ENCODE measurements at regions of chr2 and their contacts with region 1.

Region 1: GRCh38 chr2:27370026-27370815 is at the starts of genes EIF2B4 and SNX17:
- DNase-seq: peak; percentile 99
- ATAC-seq: peak; percentile 95
- H3K4me3 Mint-ChIP-seq: peak within 1 kb of the TSS; percentile 90
- H3K27ac Mint-ChIP-seq: peak within 1 kb of the TSS; percentile 95
- H3K4me1 Mint-ChIP-seq: peaks cover 39% of the 10 kb centered on the region
- H3K27me3 Mint-ChIP-seq: no peaks in the 10 kb centered on the region
- total RNA-seq, gene EIF2B4: 31.0 to 39.2 TPM
- total RNA-seq, gene SNX17: 63.9 to 82.1 TPM

Region 2: DNA sequence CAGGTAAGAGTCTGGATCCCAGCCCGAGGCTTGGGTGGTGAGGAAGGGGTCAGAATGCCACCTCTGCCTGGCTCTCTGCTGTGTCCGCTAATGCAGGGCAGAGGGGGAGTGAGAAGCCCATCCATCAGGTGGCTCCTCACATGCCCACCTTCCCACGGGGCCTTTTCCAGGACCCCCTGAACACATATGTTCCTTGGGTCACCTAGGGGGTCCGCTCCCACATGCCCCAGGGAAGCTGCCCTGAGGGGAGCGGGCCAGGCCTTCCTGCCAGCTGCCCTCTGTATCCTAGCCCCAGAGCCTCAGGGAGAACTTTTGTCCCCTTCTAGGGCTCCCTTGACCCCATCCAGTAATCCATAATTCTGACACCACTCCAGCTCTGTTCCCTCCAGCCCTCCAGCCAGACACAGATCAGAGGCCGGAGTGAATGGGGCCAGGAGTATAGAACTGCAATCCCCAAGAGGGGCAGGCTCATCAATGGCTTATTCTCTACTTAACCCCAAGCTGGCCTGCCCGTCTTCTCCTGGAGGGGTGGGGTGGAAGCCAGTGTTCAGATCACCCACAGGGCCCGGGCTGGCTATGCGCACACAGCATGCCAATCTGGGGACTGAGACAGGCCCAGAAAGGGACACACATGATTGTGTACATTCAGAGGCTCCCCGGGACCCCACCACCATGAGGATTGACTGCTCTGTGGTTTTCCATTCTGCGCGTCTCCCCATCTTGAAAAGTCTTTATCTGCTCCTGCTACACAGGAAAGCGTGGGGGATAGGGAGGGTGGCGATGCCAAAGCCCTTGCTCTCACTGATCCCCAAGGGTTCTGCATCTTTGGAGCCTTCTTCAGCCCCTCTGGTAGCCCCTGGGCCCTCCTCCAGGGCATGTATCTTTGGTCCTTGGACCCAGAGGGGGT is 290.7 kb before region 1 on chr2:
- CTCF ChIA-PET with region 1: no interaction called
- POLR2A ChIA-PET with region 1: no interaction called
- intact Hi-C with region 1: loop called in 1 of 2 experiments (anchors 1 kb)
- DNase-seq: no peak
- ATAC-seq: no peak
- H3K4me3 Mint-ChIP-seq: no peak overlapping the region
- H3K27ac Mint-ChIP-seq: peak overlapping the region; percentile 83
- H3K4me1 Mint-ChIP-seq: peaks cover 43% of the 10 kb centered on the region
- H3K27me3 Mint-ChIP-seq: no peaks in the 10 kb centered on the region

Region 3: DNA sequence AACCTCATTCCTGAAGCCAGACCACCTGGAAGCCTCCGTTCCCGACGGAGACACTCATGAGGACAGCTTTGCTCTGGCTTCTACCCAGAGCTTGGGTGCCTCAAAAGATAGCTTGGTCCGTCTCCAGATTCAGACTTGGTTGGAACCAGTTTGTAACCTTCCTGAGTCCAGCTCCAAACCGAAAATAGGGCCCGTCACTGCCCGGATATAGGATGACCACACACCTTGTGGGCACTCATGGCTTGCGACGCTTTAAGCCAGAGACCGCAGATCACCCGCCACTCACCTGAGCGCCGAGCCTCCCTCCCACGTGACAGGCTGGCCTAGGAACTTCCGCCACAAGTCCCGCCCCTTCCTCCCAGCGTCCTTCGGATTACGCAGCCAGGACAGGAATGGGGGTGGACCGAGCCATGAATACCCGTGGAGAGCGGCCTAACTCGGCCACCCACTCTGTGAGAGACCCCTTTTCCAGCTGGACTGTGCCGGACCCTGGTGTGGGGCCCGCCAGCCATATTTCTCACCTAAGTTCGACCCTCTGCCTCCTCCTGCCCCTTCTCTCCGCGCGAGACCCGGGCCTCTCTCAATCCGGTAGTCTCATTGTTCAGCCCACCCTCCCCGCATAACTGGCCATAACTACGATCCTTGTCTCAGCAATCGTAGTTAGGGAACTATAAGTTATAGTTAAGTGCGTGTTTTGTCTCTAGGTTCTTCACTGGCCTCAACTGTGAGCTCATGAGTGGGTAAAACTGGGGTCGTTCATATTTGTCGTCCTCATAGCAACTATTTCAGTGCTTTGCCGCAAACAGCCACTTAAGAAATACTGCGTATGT is 47.2 kb before region 1 on chr2 and contains the start of gene MPV17:
- CTCF ChIA-PET with region 1: interaction called, 4 read pairs
- POLR2A ChIA-PET with region 1: no interaction called
- intact Hi-C with region 1: loop called (anchors 1 kb)
- DNase-seq: peak; percentile 94
- ATAC-seq: peak; percentile 99
- H3K4me3 Mint-ChIP-seq: peak within 1 kb of the TSS; percentile 98
- H3K27ac Mint-ChIP-seq: peak within 1 kb of the TSS; percentile 98
- H3K4me1 Mint-ChIP-seq: peaks cover 17% of the 10 kb centered on the region
- H3K27me3 Mint-ChIP-seq: no peaks in the 10 kb centered on the region
- total RNA-seq, gene MPV17: 93.4 to 103 TPM

Region 4: GRCh38 chr2:27428213-27428977 is 58.2 kb after region 1 on chr2 and contains the start of gene NRBP1:
- CTCF ChIA-PET with region 1: interaction called, 5 read pairs
- POLR2A ChIA-PET with region 1: interaction called, 10 read pairs
- intact Hi-C with region 1: loop called (anchors 1 kb)
- DNase-seq: peak; percentile 97
- ATAC-seq: peak; percentile 85
- H3K4me3 Mint-ChIP-seq: peak within 1 kb of the TSS; percentile 100
- H3K27ac Mint-ChIP-seq: peak within 1 kb of the TSS; percentile 98
- H3K4me1 Mint-ChIP-seq: peaks cover 37% of the 10 kb centered on the region
- H3K27me3 Mint-ChIP-seq: no peaks in the 10 kb centered on the region
- total RNA-seq, gene NRBP1: 74.3 to 74.4 TPM

Region 5: DNA sequence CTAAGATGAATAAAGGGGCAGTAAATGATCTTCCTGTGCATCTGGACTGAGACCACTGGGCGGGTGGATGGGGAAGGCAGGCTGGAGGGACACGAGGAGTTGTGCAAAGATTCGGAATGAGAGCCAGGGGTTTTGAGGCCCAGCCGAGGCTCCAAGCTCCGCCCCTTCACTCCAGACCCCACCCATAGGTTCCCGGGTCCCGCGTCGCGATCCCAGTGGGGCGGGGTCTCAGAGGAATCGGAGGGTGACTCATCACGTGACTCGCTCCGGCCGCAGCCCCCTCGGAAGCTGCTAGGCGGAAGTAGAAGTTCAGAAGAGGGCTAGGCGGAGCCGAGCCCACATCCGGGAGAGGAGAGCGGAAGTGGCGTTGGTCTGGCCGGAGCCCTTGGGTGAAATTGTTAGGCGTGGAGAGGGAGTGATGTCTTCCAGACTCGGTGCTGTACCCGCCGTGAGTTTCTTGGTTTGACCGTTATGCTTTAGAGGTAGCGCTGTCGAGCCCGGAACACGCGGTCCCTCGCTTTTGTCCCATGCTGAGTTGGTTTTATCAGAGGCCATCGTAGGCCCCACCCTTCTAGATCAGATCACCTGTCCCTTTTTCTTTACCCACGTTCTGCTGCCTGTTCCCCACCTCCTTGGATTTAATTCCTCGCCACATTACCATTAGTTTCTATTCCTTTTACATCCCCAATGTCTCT is 212.6 kb after region 1 on chr2 and contains the start of gene ZNF512:
- CTCF ChIA-PET with region 1: no interaction called
- POLR2A ChIA-PET with region 1: no interaction called
- intact Hi-C with region 1: loop called in 1 of 2 experiments (anchors 1 kb)
- DNase-seq: peak; percentile 91
- ATAC-seq: peak; percentile 92
- H3K4me3 Mint-ChIP-seq: peak within 1 kb of the TSS; percentile 98
- H3K27ac Mint-ChIP-seq: peak within 1 kb of the TSS; percentile 98
- H3K4me1 Mint-ChIP-seq: peaks cover 47% of the 10 kb centered on the region
- H3K27me3 Mint-ChIP-seq: no peaks in the 10 kb centered on the region
- total RNA-seq, gene ZNF512: 31.8 to 34.5 TPM

Region 6: DNA sequence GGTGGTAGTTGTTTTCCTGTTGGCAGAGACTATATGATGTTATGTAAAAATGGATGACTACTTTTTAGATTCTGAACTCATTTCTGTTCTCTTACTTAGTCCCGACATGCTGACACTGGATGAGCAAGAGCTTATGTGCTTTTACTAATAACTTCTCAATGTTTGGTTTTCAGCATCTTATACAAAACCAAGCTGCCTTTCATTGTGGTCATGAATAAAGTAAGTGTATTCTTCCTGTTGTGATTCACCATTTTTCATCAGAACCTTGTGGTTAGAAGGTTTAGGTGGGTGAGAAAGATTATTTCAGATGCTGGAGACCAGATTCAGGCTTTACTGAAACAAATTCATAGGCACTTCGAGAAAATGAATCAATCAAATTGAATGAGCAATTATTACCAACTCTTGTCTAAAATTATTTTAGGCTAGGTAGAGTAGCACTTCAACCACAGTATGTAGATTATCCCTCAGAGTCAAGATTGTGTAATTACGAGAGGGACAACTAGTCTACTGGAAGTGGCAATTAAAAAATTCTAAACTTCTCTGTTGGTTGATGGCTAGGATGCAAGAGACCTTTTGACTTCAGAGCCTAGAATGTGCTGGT is 267.9 kb after region 1 on chr2:
- CTCF ChIA-PET with region 1: no interaction called
- POLR2A ChIA-PET with region 1: no interaction called
- intact Hi-C with region 1: loop called in 1 of 2 experiments (anchors 2 kb)
- DNase-seq: peak; percentile 31
- ATAC-seq: peak; percentile 88
- H3K4me3 Mint-ChIP-seq: peak overlapping the region; percentile 50
- H3K27ac Mint-ChIP-seq: peak overlapping the region; percentile 95
- H3K4me1 Mint-ChIP-seq: peaks cover 38% of the 10 kb centered on the region
- H3K27me3 Mint-ChIP-seq: no peaks in the 10 kb centered on the region